ENCODE measurements at regions of chr11 and their contacts with region 1.

Region 1: DNA sequence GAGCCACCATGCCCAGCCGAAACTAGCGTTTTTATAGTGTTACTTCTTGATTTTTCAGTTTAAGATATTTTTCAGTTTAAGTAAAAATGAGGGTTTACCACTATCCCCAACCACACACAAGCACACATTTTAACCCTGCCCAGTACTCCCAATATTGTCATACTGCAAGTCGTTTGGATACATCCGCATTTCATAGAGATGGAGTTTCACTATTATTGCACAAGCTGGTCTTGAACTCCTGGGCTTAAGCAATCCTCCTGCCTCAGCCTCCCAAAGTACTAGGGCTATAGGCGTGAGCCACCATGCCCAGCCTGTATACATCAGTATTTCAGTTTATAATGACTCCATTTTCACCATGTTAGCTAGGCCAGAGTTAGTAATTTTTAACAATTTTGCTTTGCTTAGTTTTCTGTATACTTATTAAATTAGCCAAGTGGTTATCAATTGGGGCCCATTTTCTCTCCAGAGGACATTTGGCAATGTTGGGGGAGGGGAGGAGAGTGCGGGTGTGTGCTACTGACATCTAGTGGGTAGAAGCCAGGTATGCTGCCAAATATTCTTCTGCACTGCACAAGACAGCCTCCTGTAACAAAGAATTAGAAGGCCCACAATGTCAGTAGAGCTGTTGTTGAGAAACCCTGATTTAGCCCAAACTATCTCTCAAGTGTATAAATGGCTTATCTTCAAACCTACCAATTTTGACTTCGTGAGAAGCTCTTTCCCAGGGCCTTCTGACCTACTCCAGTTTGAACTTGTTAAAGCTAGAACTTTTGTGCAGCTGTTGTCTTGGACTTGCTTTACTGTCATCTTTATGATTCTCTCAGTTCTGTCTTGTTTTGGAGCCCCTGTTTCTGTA is 7.3 kb downstream of the USP47 start:
- DNase-seq: peak; percentile 38
- ATAC-seq: peak; percentile 82
- H3K4me3 ChIP-seq: no peak overlapping the region; the same call in 1 of the 2 replicates
- H3K27ac ChIP-seq: peak overlapping the region; percentile 23; the same call in 1 of the 2 replicates
- H3K4me1 ChIP-seq: peaks cover 5% of the 10 kb centered on the region; the same call in 1 of the 2 replicates
- H3K27me3 ChIP-seq: no peaks in the 10 kb centered on the region
- CTCF ChIP-seq: peak; percentile 84 to 85 (median 85)
- EP300 ChIP-seq: no peak
- POLR2A ChIP-seq: no peak
- RAD21 ChIP-seq: peak; percentile 64

Region 2: GRCh38 chr11:11793073-11793472 is 56.0 kb before region 1 on chr11:
- CTCF ChIA-PET with region 1: interaction called, 26 read pairs
- POLR2A ChIA-PET with region 1: no interaction called
- RAD21 ChIA-PET with region 1: interaction called, 12 read pairs
- SMC1A ChIA-PET with region 1: interaction called, 12 read pairs
- in situ Hi-C with region 1: no loop called
- intact Hi-C with region 1: loop called (anchors 2 kb)
- DNase-seq: no peak
- ATAC-seq: no peak
- H3K4me3 ChIP-seq: no peak overlapping the region
- H3K27ac ChIP-seq: no peak overlapping the region
- H3K4me1 ChIP-seq: no peaks in the 10 kb centered on the region
- H3K27me3 ChIP-seq: no peaks in the 10 kb centered on the region; a peak in 1 of 4 replicates
- CTCF ChIP-seq: no peak
- EP300 ChIP-seq: no peak
- POLR2A ChIP-seq: no peak
- RAD21 ChIP-seq: no peak

Region 3: DNA sequence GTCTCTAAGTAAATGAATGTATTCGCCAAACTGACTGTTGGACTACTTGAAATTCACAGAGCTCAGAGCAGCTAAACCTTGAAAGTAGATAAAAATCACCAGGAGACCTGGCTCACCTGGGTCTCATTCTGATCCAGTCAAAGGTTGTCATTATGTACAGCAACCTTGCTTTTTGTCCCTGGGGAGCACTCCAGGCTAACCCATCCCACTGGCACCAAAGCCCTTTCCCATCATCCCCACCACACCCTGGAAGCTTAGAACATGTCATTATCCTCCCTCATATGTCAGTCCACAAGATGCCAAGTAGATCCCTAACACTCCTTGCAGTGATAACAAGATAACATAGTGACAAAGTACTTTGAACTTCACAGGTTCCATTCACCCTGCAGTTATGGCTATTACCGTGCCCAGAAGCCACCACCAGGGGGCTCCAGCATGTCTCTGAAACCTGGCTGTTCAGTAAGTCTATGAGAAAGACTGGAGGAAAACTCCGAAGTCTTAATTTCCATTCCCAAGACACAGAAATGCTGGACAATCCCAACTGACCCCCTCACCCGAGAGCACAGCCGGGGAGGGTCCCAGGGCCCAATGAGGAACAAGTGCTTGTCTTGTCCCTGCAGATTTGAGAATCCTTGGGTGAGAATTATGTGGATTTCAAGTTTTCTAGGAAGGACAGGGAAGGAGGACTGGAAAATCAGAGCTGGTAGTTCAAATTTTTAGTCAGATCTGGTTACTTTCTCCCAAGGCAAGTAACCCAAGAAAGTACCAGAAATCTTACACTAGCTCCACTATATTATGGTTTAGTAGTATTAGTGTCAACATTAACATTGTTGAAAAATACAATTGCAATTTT is 50.3 kb before region 1 on chr11:
- CTCF ChIA-PET with region 1: interaction called, 26 read pairs
- POLR2A ChIA-PET with region 1: no interaction called
- RAD21 ChIA-PET with region 1: interaction called, 5 read pairs
- SMC1A ChIA-PET with region 1: interaction called, 4 read pairs
- in situ Hi-C with region 1: no loop called
- intact Hi-C with region 1: loop called (anchors 2 kb)
- DNase-seq: no peak
- ATAC-seq: peak; percentile 89
- H3K4me3 ChIP-seq: no peak overlapping the region
- H3K27ac ChIP-seq: no peak overlapping the region
- H3K4me1 ChIP-seq: no peaks in the 10 kb centered on the region
- H3K27me3 ChIP-seq: peaks cover 0 to 3% of the 10 kb centered on the region in 2 experiments; a peak in 1 of 4 replicates
- CTCF ChIP-seq: peak; percentile 63 to 69 (median 65)
- EP300 ChIP-seq: no peak
- POLR2A ChIP-seq: no peak
- RAD21 ChIP-seq: peak; percentile 75

Region 4: DNA sequence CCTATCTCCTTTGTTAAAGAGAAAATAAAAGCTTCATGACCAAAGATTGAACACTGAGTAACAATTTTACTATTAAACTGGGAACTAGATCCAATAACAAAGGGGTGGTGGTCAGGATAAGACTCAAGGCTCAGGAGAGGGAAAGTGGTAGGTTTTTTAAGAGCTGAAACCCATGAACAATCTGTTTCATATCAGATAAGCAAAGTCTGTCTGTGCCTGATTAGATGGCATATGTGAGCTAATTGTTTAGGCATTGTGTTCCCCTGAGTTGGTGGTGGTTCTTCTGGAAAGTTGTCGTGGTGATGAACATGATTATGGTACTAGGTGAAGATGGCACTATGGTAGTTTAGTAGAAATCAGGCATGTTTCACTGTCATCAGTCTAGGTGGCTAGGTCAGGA is 17.1 kb after region 1 on chr11:
- CTCF ChIA-PET with region 1: interaction called, 211 read pairs
- POLR2A ChIA-PET with region 1: interaction called, 11 read pairs
- RAD21 ChIA-PET with region 1: interaction called, 6 read pairs
- SMC1A ChIA-PET with region 1: interaction called, 38 read pairs
- in situ Hi-C with region 1: no loop called
- intact Hi-C with region 1: no loop called
- DNase-seq: no peak
- ATAC-seq: peak; percentile 25
- H3K4me3 ChIP-seq: no peak overlapping the region
- H3K27ac ChIP-seq: peak overlapping the region; percentile 11; the same call in 1 of the 2 replicates
- H3K4me1 ChIP-seq: peaks cover 9% of the 10 kb centered on the region
- H3K27me3 ChIP-seq: no peaks in the 10 kb centered on the region
- CTCF ChIP-seq: no peak
- EP300 ChIP-seq: no peak
- POLR2A ChIP-seq: no peak
- RAD21 ChIP-seq: no peak

Region 5: DNA sequence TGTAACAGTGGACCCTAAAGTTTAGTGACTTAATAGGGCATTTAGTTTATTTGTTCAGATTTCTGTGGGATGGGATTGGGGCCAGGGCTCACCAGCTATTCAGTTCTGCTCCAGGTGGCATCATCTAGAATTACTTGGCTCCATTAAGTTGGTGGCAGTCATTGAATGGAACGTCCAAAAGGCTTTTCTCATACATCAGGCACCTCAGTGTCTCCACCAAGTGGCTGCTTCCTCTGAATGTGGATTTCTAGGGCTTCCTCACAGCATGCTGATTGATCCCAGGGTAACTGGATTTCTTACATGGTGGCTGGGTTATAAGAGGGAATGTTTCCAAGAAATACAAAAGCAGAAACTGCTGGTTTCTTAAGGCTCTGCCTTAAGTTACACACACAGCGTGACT is 27.3 kb after region 1 on chr11:
- CTCF ChIA-PET with region 1: interaction called, 13 read pairs
- POLR2A ChIA-PET with region 1: no interaction called
- RAD21 ChIA-PET with region 1: interaction called, 4 read pairs
- SMC1A ChIA-PET with region 1: interaction called, 7 read pairs
- in situ Hi-C with region 1: no loop called
- intact Hi-C with region 1: no loop called
- DNase-seq: no peak
- ATAC-seq: peak; percentile 61
- H3K4me3 ChIP-seq: no peak overlapping the region
- H3K27ac ChIP-seq: no peak overlapping the region
- H3K4me1 ChIP-seq: peaks cover 4% of the 10 kb centered on the region; the same call in 1 of the 2 replicates
- H3K27me3 ChIP-seq: no peaks in the 10 kb centered on the region
- CTCF ChIP-seq: peak; percentile 3 to 29 (median 23); a peak in 2 of 6 replicates
- EP300 ChIP-seq: no peak
- POLR2A ChIP-seq: no peak
- RAD21 ChIP-seq: no peak

Region 6: GRCh38 chr11:11882539-11882938 is 33.4 kb after region 1 on chr11:
- CTCF ChIA-PET with region 1: interaction called, 13 read pairs
- POLR2A ChIA-PET with region 1: interaction called, 6 read pairs
- RAD21 ChIA-PET with region 1: interaction called, 4 read pairs
- SMC1A ChIA-PET with region 1: interaction called, 8 read pairs
- in situ Hi-C with region 1: no loop called
- intact Hi-C with region 1: no loop called
- DNase-seq: no peak
- ATAC-seq: no peak
- H3K4me3 ChIP-seq: no peak overlapping the region
- H3K27ac ChIP-seq: no peak overlapping the region
- H3K4me1 ChIP-seq: peaks cover 11% of the 10 kb centered on the region; the same call in 1 of the 2 replicates
- H3K27me3 ChIP-seq: no peaks in the 10 kb centered on the region
- CTCF ChIP-seq: no peak
- EP300 ChIP-seq: no peak
- POLR2A ChIP-seq: no peak
- RAD21 ChIP-seq: no peak

Region 7: DNA sequence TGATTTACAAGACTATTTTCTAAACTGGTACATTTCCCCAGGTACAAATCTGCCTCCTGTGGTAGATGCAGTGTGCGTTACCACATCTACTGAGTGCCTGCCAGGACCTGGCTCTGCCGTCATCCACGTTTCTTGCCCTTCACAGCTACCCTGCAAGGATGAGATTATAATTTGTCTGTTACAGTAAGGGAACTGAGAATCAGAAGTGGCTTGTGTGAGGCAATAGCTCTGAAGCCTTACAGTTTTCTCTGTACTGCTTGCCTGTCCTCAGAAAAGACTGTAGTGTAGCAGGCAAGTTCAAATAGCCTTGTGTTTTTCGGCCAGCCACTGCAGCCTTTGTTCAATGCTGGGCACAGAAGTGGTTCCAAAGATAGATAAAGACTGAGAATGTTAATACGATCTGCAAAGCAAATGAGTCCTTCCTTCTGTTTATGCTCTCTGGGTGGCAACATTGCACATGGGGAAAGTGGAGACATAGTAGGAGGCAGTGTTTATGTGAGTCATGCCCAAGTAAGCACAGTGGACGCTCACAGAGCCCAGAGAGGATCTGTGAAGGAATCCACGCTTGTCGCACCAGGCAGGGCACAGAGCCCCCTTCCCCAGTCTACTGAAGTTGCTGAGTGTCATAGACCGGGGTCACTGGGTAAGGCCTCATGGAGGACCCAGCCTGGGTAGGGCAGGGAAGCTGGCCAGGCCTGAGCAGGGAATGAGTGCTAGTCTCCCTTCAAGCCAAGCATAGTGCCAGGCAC is 310.4 kb after region 1 on chr11:
- CTCF ChIA-PET with region 1: no interaction called
- POLR2A ChIA-PET with region 1: no interaction called
- RAD21 ChIA-PET with region 1: no interaction called
- SMC1A ChIA-PET with region 1: no interaction called
- in situ Hi-C with region 1: no loop called
- intact Hi-C with region 1: no loop called
- DNase-seq: no peak
- ATAC-seq: peak; percentile 46
- H3K4me3 ChIP-seq: no peak overlapping the region
- H3K27ac ChIP-seq: no peak overlapping the region
- H3K4me1 ChIP-seq: no peaks in the 10 kb centered on the region
- H3K27me3 ChIP-seq: no peaks in the 10 kb centered on the region
- CTCF ChIP-seq: no peak
- EP300 ChIP-seq: no peak
- POLR2A ChIP-seq: no peak
- RAD21 ChIP-seq: no peak

Measured in GM12878 (cell line).